GM10248 (cell line): ENCODE measurements at regions of chr2 and their contacts with region 1.

Region 1: GRCh38 chr2:227655454-227655853 is 11.2 kb upstream of the SCYGR5 start:
- DNase-seq: peak; percentile 18
- CTCF ChIP-seq: no peak

Region 2: GRCh38 chr2:226782092-226782713 is 873.3 kb before region 1 on chr2:
- CTCF ChIA-PET with region 1: no interaction called
- POLR2A ChIA-PET with region 1: no interaction called
- DNase-seq: no peak
- CTCF ChIP-seq: no peak

Region 3: GRCh38 chr2:227632827-227633226 is 22.6 kb before region 1 on chr2:
- CTCF ChIA-PET with region 1: interaction called, 13 read pairs
- POLR2A ChIA-PET with region 1: no interaction called
- DNase-seq: no peak
- CTCF ChIP-seq: no peak

Region 4: DNA sequence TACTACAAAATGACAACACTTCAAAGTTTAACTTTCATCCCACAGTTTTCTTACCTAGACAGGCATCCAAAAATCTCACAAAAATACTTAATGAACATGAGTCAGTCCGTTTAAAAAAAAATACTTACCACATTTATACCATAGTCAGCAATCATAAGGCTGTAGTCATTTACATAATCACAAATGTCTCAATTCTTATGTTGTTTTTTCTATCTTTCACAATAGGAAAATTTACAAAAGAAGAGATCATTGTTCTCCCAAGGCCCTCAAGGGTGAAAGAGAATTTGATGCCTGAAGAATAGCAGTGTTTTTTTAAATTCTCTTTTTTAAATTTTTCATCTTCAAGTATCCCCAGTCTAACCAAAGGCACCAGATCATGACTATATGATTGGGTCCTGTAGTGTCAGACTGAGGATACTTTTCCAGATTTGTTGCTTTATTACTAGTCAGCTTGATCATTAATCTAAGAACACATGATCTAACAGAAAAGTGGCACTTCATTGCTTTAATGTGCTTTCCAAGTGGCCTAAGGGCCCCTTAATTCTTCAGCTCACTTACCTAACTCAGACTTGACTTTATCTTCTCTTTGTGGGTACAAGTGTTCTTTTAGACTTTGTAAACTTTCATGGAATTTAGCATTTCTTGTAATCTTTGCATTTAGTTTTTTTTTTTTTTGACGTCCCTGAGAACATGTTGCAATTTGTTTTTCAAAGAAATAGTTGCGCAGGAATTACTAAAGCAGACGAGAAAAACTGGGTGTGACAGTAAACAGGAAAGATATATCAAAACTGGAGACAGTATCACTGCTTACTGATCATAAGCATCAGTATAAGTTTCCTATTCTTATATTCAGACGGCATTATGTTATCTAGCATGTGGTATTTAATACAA is 16.0 kb after region 1 on chr2:
- CTCF ChIA-PET with region 1: interaction called, 26 read pairs
- POLR2A ChIA-PET with region 1: no interaction called
- DNase-seq: no peak
- CTCF ChIP-seq: no peak

Region 5: DNA sequence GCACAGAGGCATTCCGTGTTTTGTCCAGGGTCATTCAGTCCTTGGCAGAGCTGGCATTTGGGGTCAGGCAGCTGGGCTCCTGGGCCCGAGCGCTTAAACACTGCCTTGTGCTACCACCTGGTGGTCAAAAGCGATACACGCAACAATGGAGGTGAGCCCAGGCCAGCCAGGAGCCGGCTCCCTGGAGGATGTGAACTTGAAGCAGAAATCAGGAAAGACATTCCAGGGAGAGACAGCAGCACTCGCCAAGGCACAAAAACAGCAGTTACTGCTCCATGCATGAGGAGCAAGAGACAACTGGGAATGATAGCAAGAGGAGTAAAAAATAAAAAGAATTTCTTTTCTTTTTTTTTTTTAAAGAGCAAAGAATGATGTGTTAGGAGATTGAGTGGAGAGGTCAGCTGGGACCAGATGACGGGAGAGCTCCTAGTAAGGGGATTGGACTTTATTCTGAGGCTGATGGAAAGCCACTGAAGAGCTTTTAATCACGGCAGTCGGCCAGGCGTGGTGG is 111.0 kb after region 1 on chr2:
- CTCF ChIA-PET with region 1: interaction called, 46 read pairs
- POLR2A ChIA-PET with region 1: no interaction called
- DNase-seq: peak; percentile 79
- CTCF ChIP-seq: peak; percentile 89

Region 6: DNA sequence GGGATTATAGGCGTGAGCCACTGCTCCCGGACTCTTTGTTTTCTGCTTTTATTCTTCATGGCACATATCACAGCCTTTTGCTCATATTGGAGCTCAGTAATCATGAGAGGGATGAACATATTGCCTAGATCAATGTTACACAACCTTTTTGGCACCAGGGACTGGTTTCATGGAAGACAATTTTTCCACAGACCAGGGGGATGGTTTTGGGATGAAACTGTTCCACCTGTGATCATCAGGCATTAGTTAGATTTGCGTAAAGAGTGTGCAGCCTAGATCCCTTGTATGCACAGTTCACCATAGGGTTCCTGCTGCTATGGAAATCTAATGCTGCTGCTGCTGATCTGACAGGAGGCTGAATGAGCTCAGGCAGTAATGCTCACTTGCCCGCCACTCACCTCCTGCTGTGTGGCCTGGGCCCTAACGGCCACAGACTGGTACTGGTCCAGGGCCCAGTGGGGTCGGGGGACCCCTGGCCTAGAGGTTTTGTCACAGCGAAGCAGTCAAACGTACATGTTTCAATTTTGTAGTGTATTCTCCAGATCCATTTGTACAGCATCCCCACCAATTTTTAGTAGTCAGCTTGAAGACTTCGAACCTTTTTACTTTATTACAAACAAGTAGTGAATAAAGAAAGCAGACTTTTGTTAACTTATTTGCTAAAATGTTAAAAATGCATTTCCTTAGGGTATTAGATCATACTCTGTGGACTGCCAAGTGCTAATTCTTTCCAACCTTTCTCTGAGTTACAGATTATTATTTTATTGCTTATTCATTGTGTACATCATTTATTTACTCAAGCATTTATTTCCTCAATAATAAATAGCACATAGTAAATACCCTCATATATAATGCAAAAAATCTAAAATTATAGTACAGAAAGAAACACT is 222.2 kb after region 1 on chr2:
- CTCF ChIA-PET with region 1: interaction called, 17 read pairs
- POLR2A ChIA-PET with region 1: no interaction called
- DNase-seq: no peak
- CTCF ChIP-seq: no peak

Region 7: GRCh38 chr2:227890495-227891079 is 235.1 kb after region 1 on chr2:
- CTCF ChIA-PET with region 1: interaction called, 22 read pairs
- POLR2A ChIA-PET with region 1: no interaction called
- DNase-seq: peak; percentile 34
- CTCF ChIP-seq: peak; percentile 57